ENCODE measurements at regions of chr1 and their contacts with region 1.

Region 1: GRCh38 chr1:110034451-110035235 is at the start of gene STRIP1:
- DNase-seq: peak; percentile 89
- ATAC-seq: peak; percentile 95
- H3K4me3 ChIP-seq: peak within 1 kb of the TSS; percentile 82 to 88
- H3K27ac ChIP-seq: peak within 1 kb of the TSS; percentile 98
- H3K4me1 ChIP-seq: peaks cover 14% of the 10 kb centered on the region
- H3K27me3 ChIP-seq: no peaks in the 10 kb centered on the region
- CTCF ChIP-seq: no peak
- total RNA-seq, gene STRIP1: 26.1 TPM

Region 2: DNA sequence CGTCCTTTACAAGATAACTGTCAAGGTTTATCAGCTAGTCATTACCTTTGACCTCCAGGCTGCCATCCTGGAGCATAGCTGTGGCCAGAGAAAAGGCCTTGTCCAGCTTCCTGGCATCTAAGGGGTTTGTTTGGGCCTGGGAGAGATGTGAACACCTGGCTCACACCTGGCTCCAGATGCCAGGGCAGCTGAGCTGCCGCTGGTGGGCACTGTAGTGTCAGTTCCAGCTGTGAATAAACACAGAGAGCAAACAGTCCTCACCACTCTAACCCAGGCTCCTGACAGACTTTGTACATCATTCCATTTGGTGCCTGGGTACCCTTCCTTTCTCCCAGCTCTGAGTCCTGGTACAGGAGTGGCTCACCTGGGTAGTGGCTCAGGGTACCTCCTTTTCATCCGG is 498.6 kb after region 1 on chr1:
- CTCF ChIA-PET with region 1: no interaction called
- POLR2A ChIA-PET with region 1: interaction called, 11 read pairs
- in situ Hi-C with region 1: no loop called
- intact Hi-C with region 1: no loop called
- DNase-seq: no peak
- ATAC-seq: no peak
- H3K4me3 ChIP-seq: no peak overlapping the region
- H3K27ac ChIP-seq: no peak overlapping the region
- H3K4me1 ChIP-seq: no peaks in the 10 kb centered on the region
- H3K27me3 ChIP-seq: peaks cover 2% of the 10 kb centered on the region; the same call in 1 of the 2 replicates
- CTCF ChIP-seq: no peak

Region 3: GRCh38 chr1:110936567-110936966 is 901.9 kb after region 1 on chr1:
- CTCF ChIA-PET with region 1: no interaction called
- POLR2A ChIA-PET with region 1: no interaction called
- in situ Hi-C with region 1: no loop called
- intact Hi-C with region 1: no loop called
- DNase-seq: no peak
- ATAC-seq: no peak
- H3K4me3 ChIP-seq: no peak overlapping the region
- H3K27ac ChIP-seq: no peak overlapping the region
- H3K4me1 ChIP-seq: no peaks in the 10 kb centered on the region
- H3K27me3 ChIP-seq: no peaks in the 10 kb centered on the region
- CTCF ChIP-seq: no peak

Measured in Panc1 (cell line).